GM18951 (cell line): ENCODE measurements at regions of chr5 and their contacts with region 1.

Region 1: GRCh38 chr5:95261437-95262175 is 23.3 kb downstream of the MCTP1 start:
- POLR2A ChIP-seq: no peak

Region 2: DNA sequence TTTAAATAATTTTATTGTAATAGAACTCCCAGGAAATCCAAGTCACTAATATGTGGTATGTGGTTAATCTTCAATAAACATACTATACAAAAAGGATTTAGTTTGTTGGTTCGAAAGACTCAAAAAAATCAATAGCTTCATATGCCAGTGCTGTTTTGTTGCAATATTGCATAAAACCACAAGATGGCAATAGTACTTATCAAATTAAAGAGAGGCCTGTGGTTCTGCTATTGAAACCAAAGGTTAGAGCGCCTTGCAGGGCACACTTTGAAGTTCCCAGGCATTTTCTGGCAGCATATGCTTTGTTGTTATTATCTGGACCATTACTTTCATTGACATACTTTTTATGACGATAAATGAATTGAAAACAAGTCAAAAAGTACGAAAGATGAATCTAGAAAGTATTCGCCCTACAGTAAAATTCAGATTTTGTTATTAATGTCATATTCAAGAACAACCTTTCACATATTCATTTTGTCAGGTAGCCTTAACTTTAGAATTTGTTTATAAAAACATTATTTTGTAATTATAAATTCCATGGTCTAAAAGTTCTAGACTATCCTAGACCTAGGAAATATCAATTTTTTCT is 293.0 kb before region 1 on chr5:
- in situ Hi-C with region 1: loop called (anchors 10 kb)
- POLR2A ChIP-seq: no peak